Stomach (tissue), 19 donors: ENCODE measurements at regions of chr4 and their contacts with region 1.

Region 1: DNA sequence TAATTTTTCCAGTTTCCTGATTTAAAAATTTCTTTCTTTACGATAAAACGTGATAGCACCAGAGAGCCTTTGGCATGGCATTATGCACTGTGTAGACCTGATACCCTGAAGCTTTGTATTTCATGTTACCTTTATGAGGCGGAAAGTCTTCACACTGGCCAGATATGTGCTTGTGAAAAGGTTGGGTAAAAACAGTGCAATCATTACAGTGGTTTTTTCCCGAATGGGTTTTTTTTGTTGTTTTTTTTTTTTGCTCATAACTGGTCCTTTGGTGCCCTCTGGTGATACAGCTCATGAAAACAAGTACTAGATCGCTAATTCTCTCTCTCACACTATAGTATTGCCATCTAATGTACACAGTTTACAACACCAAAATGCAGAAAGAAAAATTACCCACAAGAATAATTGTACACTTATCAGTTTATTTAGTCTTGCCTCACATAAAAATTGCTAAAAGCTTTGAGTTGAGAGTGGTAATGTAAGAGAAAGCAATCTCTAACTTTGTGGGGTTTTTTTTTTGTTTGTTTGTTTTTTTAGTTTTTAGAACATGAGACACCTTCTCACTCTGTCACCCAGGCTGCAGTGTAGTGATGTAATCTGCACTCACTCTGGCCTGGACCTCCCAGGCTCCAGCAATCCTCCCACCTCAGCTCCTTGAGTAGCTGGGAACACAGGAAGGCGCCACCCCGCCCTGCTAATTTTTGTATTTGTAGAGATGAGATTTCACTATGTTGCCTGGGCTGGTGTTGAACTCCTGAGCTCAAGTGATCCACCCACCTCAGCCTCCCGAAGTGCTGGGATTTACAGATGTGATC is 21.3 kb downstream of the SPCS3 start:
- DNase-seq: peak in 1 of 2 donors; percentile 62
- H3K4me3 ChIP-seq: peak overlapping the region in 1 of 4 donors; percentile 18
- H3K27ac ChIP-seq: no peak overlapping the region
- H3K4me1 ChIP-seq: peaks cover 0 to 20% (median 5%) of the 10 kb centered on the region in 4 donors
- H3K27me3 ChIP-seq: no peaks in the 10 kb centered on the region
- CTCF ChIP-seq: peak in 4 of 7 experiments; percentile 3 to 60 (median 16)
- EP300 ChIP-seq: no peak
- POLR2A ChIP-seq: no peak

Region 2: DNA sequence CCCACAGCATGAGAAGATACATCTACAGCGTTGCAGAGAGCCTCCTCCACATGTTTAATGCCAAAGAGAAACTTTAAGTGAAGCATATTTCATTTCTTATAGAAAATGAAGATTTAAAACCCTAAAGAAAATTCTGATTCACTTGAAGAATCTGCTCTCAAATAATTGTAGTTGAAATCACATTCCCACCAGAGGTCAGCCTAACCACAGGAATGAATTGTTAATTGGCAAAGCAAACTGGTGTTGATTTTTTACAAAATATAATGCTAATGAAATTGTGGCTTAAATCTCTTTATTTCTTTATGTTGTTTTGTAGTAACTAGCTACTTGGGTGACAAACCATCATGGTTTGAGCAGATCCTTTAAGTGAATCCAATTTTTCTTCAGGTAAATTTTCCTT is 306.6 kb before region 1 on chr4:
- intact Hi-C with region 1: loop called (anchors 10 kb)
- DNase-seq: peak in 1 of 2 donors; percentile 73
- H3K4me3 ChIP-seq: no peak overlapping the region
- H3K27ac ChIP-seq: no peak overlapping the region
- H3K4me1 ChIP-seq: no peaks in the 10 kb centered on the region
- H3K27me3 ChIP-seq: no peaks in the 10 kb centered on the region
- CTCF ChIP-seq: peak in 1 of 7 experiments; percentile 5
- EP300 ChIP-seq: no peak
- POLR2A ChIP-seq: no peak

Region 3: DNA sequence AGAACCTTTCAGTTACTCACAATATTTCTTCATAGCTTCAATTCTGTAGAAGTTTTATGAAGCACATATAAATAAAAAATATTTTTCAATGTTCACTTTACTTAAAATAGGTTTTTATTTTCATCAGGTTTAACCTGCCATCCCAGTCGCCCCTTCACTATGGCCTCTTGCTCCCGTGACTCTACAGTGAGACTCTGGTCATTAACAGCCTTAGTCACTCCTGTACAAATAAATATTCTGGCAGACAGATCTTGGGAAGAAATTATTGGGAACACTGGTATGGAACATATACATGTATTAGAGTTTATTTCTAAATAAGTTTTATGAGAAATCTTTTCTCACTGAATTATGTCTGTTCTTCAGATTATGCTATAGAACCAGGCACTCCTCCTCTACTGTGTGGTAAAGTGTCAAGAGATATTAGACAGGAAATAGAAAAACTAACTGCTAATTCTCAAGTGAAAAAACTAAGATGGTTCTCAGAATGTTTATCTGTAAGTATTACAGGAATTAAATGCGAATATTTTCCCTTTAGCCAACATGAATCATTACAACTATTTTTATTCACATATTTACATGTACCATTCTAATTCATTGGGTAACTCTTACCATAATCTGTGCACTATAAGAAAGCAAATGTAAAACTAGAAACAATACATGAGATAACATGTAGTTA is 191.3 kb before region 1 on chr4:
- intact Hi-C with region 1: loop called (anchors 5 kb)
- DNase-seq: no peak
- H3K4me3 ChIP-seq: no peak overlapping the region
- H3K27ac ChIP-seq: no peak overlapping the region
- H3K4me1 ChIP-seq: peaks cover 0 to 9% (median 0%) of the 10 kb centered on the region in 4 donors
- H3K27me3 ChIP-seq: no peaks in the 10 kb centered on the region
- CTCF ChIP-seq: no peak
- EP300 ChIP-seq: no peak
- POLR2A ChIP-seq: no peak